Transverse colon (tissue), 4 donors: ENCODE measurements at regions of chr19 and their contacts with region 1.

Region 1: DNA sequence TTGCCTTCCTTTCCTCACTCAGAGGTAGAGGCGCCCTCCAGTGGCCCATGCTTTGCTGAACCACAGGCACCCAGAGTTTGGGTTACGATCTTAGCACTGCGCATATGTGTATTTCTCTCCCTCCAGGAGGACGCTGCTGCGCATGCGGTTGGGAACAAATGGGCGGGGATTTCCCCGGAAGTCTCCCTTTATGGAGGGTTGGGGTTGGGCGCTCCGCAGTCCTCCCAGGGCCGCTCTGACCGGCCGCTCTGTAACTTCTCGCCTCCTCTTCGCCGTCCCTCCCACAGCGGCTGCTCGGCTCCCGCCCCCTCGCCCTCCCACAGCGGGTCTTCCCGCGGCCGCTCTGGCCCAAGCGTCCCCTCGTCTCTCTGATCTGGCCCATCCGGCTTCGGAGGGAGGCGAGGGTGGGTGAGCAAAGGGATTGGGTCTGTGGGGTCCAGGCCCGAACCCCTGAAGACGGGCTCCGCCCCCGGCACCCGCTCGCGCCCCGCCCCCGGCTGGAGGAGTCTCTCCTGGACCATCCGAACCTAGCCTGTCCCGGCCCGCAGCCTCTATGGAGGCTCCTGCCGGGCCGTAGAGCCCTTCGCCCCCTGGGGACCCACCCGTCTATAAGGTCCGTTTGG is at the start of gene MEGF8:
- DNase-seq: peak; percentile 99
- H3K4me3 ChIP-seq: peak within 1 kb of the TSS; percentile 49 to 96 (median 86)
- H3K27ac ChIP-seq: peak within 1 kb of the TSS; percentile 73 to 88 (median 86)
- H3K4me1 ChIP-seq: peaks cover 23 to 39% (median 27%) of the 10 kb centered on the region in 4 donors
- H3K27me3 ChIP-seq: peaks cover 36% of the 10 kb centered on the region
- CTCF ChIP-seq: peak; percentile 77 to 95 (median 86)
- EP300 ChIP-seq: no peak
- POLR2A ChIP-seq: peak; percentile 81
- total RNA-seq, gene MEGF8: 15.3 to 40.4 (median 22.8) TPM

Region 2: DNA sequence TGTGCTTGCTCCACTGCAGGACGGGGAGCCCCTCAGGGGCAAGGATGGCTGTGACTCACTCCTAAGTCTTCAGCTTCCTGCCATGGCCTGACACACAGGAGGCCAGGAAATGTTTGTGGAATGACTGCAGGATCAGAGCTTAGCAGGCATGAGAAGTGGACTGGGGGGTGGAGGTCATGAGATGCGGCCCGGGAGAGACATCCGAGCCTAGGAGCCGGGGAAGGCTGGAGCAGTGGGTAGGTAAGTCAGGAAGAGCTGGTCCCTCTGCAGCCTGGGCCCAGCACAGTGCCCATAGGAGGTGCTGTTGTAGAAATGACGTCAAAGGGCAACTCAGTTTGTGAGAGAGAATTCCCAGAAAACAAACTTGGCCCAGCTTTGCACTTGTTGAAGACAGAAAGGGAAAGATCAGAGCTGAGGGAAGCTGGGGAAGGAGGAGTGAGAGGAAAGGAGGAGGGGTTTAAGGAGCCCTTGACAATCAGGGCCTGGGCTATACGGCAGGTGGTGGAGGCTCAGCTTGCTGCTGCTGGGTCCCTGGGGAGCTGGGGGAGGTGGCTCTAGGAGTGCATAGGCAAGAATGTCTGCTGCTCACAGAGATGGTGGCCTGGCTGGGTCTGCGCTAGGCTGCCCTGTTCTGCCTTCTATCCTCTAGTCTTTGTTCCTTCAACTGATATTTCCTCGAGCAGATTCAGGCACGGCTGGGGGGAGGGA is 211.6 kb before region 1 on chr19:
- in situ Hi-C with region 1: loop called in 3 of 4 experiments (anchors 10 to 25 kb)
- intact Hi-C with region 1: no loop called
- DNase-seq: no peak
- H3K4me3 ChIP-seq: no peak overlapping the region
- H3K27ac ChIP-seq: peak overlapping the region in 3 of 4 donors; percentile 8 to 67 (median 47)
- H3K4me1 ChIP-seq: peaks cover 0 to 11% (median 2%) of the 10 kb centered on the region in 4 donors
- H3K27me3 ChIP-seq: no peaks in the 10 kb centered on the region
- CTCF ChIP-seq: no peak
- EP300 ChIP-seq: no peak
- POLR2A ChIP-seq: no peak

Region 3: DNA sequence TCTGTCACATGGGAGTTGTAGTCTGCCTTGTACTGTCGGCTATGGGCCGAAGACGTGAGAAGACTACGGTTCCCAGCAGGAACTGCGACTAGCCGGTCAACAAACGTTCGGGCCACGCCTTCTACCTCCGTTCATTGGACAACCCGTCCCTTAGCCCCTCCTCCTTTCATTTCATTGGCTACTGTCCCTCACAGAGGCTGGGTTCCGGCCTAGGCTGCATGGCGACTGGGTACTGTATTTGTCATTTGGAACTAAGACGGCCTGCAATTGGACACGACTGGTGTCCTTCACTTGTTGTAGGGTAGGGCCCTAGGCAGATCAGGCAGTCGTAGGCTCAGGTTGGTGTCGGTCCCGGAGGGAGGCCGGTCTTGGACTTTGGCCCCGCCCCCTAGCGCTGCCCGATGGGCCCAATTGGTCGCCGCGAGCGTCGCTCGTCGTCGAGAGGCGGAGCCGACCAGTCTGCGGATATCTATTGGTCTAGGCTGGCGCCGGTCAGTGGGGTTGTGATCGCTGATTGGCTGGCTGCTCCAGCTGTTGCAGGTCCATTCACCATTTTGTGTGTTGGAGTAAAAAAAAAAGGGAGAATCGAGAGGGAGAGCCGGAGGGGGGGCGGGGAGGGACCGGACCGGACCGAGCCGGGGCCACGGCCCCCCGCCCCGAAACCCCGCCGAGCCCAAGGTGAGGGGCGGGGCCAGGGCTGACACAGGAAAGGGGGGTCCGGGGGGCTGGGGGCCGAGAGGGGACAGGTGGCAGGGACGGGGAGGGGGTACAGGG is 56.5 kb before region 1 on chr19 and contains the start of gene CIC:
- in situ Hi-C with region 1: no loop called
- intact Hi-C with region 1: no loop called
- DNase-seq: peak; percentile 100
- H3K4me3 ChIP-seq: peak within 1 kb of the TSS; percentile 59 to 83 (median 80)
- H3K27ac ChIP-seq: peak within 1 kb of the TSS; percentile 95 to 99 (median 98)
- H3K4me1 ChIP-seq: peaks cover 21 to 30% (median 23%) of the 10 kb centered on the region in 4 donors
- H3K27me3 ChIP-seq: no peaks in the 10 kb centered on the region
- CTCF ChIP-seq: no peak
- EP300 ChIP-seq: no peak
- POLR2A ChIP-seq: no peak
- total RNA-seq, gene CIC: 35.1 to 96.5 (median 43.6) TPM